ENCODE measurements at regions of chr11 and their contacts with region 1.

Region 1: GRCh38 chr11:34449013-34449412 is 10.3 kb downstream of the CAT start:
- DNase-seq: peak in 2 of 3 donors; percentile 46 to 50
- H3K4me3 ChIP-seq: peak overlapping the region in 5 of 7 experiments; percentile 21 to 56 (median 52)
- H3K27ac ChIP-seq: peak overlapping the region; percentile 39 to 41
- H3K4me1 ChIP-seq: peaks cover 37 to 80% (median 61%) of the 10 kb centered on the region in 4 experiments
- H3K27me3 ChIP-seq: no peaks in the 10 kb centered on the region

Region 2: GRCh38 chr11:34438529-34439507 is 10.2 kb before region 1 on chr11 and contains the start of gene CAT:
- CTCF ChIA-PET with region 1: interaction called, 28 read pairs
- POLR2A ChIA-PET with region 1: no interaction called
- DNase-seq: peak; percentile 99 to 100 (median 99)
- H3K4me3 ChIP-seq: peak within 1 kb of the TSS; percentile 87 to 96 (median 95)
- H3K27ac ChIP-seq: peak within 1 kb of the TSS; percentile 80 to 91
- H3K4me1 ChIP-seq: peaks cover 21 to 42% (median 26%) of the 10 kb centered on the region in 4 experiments
- H3K27me3 ChIP-seq: no peaks in the 10 kb centered on the region

Region 3: GRCh38 chr11:34461215-34461614 is 12.2 kb after region 1 on chr11:
- CTCF ChIA-PET with region 1: interaction called, 20 read pairs
- POLR2A ChIA-PET with region 1: no interaction called
- DNase-seq: no peak
- H3K4me3 ChIP-seq: no peak overlapping the region
- H3K27ac ChIP-seq: no peak overlapping the region
- H3K4me1 ChIP-seq: peaks cover 0 to 7% (median 0%) of the 10 kb centered on the region in 4 experiments
- H3K27me3 ChIP-seq: no peaks in the 10 kb centered on the region

Region 4: GRCh38 chr11:34487430-34487829 is 38.4 kb after region 1 on chr11:
- CTCF ChIA-PET with region 1: no interaction called
- POLR2A ChIA-PET with region 1: no interaction called
- DNase-seq: no peak
- H3K4me3 ChIP-seq: no peak overlapping the region
- H3K27ac ChIP-seq: no peak overlapping the region
- H3K4me1 ChIP-seq: no peaks in the 10 kb centered on the region
- H3K27me3 ChIP-seq: no peaks in the 10 kb centered on the region

Region 5: DNA sequence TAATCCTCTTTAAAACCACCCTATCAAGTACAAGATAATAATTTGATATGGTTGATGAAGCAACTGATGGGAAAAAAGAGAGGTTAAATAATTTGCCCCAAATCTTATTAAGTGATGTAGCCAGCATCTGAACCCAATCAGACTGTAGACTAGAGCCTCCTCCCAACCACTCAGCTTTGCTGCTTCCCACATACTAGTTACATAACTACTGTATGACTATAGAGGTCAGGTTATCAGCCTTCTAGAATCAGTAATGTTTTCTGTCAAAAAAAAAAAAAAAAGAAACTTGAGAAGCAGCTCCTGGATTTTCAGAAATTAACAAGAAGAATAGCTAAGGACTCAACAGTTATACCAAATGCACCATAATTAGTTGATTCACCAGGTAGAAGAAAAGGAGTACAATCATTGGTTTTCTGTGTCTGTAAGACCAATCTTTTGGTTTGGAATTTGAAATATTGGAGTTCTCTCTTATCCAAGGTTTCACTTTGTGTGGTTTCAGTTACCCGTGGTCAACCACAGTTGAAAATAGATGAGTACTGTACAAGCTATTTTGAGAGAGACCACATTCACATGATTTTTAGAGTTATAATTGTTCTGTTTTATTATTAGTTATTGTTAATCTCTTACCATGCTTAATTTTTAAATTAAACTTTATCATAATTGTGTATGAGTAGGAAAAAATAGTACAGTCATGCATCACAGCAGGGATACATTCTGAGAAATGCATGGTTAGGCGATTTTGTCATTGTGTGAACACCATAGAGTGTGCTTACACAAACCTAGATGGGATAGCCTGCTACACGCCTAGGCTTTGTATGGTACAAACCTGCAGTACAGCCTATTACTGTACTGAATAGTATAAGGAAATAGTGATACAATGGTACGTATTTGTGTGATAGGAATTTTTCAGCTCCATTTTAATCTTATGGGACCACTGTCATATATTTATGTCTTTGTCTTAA is 539.6 kb after region 1 on chr11:
- CTCF ChIA-PET with region 1: no interaction called
- POLR2A ChIA-PET with region 1: no interaction called
- DNase-seq: peak in 2 of 3 donors; percentile 57 to 60
- H3K4me3 ChIP-seq: peak overlapping the region in 4 of 7 experiments; percentile 19 to 51 (median 32)
- H3K27ac ChIP-seq: peak overlapping the region; percentile 1 to 47
- H3K4me1 ChIP-seq: peaks cover 4 to 32% (median 18%) of the 10 kb centered on the region in 4 experiments
- H3K27me3 ChIP-seq: no peaks in the 10 kb centered on the region